Dendritic cell treated with granulocyte-macrophage colony-stimulating factor and Interleukin-4, amounts not matched to agents 40 ng/mL and 50 ng/mL, for 4 days (primary cell): ENCODE measurements at regions of chr9 and their contacts with region 1.

Region 1: DNA sequence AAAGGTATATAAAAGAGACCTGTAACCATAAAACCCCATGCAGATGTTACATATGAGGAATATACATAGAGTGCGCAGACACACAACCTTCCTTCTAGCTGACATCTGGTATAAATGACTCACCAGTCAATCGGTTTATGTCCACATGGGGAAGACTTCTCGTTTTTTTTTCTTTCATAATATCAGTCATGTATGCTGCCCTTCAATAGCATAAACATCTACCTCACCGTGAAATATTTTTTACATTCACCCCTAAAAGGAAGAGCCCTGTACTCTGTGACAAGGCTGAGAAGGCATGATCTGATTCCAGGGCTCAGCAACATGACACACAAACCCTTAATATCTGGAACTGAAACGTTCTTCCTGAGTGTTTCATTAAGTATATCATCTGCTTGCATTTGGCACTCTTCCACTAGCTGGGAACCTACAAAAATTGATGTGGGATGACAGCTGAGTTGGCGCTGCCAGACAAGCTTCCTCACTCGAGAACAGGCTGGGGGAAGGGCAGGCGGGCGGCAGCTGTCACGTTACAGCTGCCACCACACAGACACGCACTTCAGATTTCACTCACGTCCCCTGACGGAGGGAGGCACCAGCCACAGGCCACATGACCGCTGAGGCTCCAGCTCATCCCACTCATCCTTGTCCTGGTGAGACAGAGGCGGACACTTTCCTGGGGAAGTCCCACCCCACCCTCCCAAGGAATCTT is 74.2 kb downstream of the SHB start:
- H3K4me3 Mint-ChIP-seq: peak overlapping the region; percentile 49
- H3K27ac Mint-ChIP-seq: peak overlapping the region; percentile 86
- H3K4me1 Mint-ChIP-seq: peaks cover 97% of the 10 kb centered on the region
- H3K27me3 Mint-ChIP-seq: no peaks in the 10 kb centered on the region

Region 2: DNA sequence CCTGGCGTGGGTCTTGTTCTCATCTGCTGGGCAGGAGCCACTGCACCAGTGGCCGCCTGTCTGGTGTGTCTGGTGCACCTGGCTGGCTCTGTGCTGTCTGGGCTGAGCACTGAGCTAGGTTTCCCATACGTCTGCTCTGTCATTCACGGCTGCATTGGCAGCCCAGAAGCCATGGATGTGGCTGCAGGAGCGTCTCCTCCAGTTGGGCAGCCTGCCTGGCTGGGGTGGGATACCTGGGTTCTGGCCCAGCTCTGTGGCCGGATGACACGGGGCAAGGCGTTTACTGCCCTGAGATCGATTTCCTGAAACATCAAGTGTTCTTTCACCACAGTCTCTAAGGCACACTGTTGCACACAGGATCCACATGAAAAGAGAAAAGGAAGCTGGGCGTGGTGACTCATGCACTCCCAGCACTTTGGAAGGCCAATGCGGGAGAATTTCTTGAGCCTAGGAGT is 65.3 kb before region 1 on chr9:
- intact Hi-C with region 1: loop called (anchors 5 kb)
- H3K4me3 Mint-ChIP-seq: no peak overlapping the region
- H3K27ac Mint-ChIP-seq: peak overlapping the region; percentile 74
- H3K4me1 Mint-ChIP-seq: peaks cover 59% of the 10 kb centered on the region
- H3K27me3 Mint-ChIP-seq: no peaks in the 10 kb centered on the region

Region 3: DNA sequence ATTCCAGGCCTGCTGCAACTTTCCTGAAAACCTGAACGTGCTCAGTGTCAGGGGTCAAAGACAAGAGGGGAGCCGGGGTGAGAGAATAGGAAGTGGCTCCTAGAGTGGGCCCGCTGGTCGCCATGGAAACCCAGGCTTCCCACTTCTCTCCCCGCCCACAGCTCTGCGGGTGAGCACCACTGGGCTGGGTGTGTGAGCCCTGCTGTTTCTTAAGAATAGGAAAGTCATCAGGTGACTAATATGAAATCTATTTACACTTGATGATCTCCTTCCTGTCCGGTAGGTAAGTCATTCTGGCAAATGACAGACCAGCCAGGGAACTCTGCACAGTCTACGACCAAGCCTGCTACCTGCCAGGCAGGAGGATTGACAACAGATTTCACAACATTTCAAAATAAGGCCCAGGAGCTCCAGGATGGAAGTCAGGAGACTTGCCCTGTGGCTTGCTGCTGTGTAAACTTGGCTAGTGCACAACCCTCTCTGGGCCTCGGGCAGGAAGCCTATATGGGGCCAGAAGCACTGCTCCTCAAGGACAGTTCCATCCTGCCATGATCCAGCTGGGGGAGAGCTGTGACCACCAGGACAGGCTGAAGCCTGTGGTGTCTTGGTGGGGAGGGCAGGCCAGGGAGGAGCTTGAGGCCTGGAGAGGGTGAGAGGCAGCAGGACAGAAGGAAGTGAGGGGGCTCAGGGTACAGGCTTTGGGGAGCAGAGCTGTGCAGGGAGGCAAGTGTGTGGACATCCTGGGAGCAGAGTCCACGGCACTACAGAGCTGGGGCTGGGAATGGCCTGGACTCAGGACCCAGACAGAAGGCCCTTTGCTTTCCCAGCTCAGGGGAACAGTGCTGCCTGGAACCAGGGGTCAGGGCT is 13.6 kb after region 1 on chr9:
- intact Hi-C with region 1: loop called (anchors 1 kb)
- H3K4me3 Mint-ChIP-seq: peak overlapping the region; percentile 68
- H3K27ac Mint-ChIP-seq: peak overlapping the region; percentile 93
- H3K4me1 Mint-ChIP-seq: peaks cover 87% of the 10 kb centered on the region
- H3K27me3 Mint-ChIP-seq: no peaks in the 10 kb centered on the region

Region 4: GRCh38 chr9:38047301-38048251 is 52.8 kb after region 1 on chr9:
- intact Hi-C with region 1: loop called (anchors 5 kb)
- H3K4me3 Mint-ChIP-seq: peak overlapping the region; percentile 25
- H3K27ac Mint-ChIP-seq: peak overlapping the region; percentile 67
- H3K4me1 Mint-ChIP-seq: peaks cover 50% of the 10 kb centered on the region
- H3K27me3 Mint-ChIP-seq: no peaks in the 10 kb centered on the region

Region 5: DNA sequence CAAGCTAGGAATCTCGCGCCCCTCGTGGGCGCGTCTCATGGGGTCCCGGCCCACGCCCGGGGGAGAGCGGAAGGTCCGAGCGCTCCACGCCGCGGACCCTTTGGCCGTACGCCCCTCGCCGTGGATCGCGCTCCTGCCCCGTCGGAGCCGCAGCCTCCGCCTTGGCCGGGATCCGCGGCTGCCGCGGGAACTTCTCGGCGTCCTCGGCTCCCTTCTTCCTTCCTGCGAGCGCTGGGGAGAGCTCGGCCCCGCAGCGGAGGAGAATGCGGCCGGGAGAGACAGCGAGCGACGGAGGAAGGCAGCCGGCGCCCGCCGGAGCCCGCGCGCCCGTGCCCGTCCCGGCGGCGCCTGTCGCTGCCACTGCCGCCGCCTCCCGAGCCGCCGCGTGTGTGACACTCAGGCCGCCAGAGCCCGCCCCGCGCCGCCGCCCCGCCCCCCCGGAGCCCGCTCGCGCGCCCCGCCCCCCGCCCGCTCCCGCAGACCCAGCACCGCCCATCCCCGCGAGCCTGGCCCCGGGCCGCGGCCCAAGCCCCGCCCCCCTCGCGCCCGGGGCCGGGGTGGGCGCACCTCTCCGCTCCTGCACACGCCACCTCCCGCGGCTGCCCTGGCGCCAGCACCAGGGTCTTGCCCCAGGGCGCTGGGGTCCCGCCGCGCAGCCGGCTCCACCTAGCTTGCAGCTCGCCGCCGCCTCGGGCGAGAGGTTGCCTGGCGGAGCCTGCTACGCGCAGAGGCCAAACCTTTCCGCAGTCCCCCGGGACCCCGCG is 74.3 kb after region 1 on chr9 and contains the start of gene SHB:
- intact Hi-C with region 1: loop called (anchors 1 kb)
- H3K4me3 Mint-ChIP-seq: peak within 1 kb of the TSS; percentile 85
- H3K27ac Mint-ChIP-seq: peak within 1 kb of the TSS; percentile 81
- H3K4me1 Mint-ChIP-seq: peaks cover 68% of the 10 kb centered on the region
- H3K27me3 Mint-ChIP-seq: peaks cover 3% of the 10 kb centered on the region

Region 6: GRCh38 chr9:38417003-38417945 is 422.5 kb after region 1 on chr9:
- intact Hi-C with region 1: no loop called
- H3K4me3 Mint-ChIP-seq: no peak overlapping the region
- H3K27ac Mint-ChIP-seq: no peak overlapping the region
- H3K4me1 Mint-ChIP-seq: no peaks in the 10 kb centered on the region
- H3K27me3 Mint-ChIP-seq: peaks cover 17% of the 10 kb centered on the region